CD4-positive, alpha-beta T cell (primary cell): ENCODE measurements at regions of chr3 and their contacts with region 1.

Region 1: DNA sequence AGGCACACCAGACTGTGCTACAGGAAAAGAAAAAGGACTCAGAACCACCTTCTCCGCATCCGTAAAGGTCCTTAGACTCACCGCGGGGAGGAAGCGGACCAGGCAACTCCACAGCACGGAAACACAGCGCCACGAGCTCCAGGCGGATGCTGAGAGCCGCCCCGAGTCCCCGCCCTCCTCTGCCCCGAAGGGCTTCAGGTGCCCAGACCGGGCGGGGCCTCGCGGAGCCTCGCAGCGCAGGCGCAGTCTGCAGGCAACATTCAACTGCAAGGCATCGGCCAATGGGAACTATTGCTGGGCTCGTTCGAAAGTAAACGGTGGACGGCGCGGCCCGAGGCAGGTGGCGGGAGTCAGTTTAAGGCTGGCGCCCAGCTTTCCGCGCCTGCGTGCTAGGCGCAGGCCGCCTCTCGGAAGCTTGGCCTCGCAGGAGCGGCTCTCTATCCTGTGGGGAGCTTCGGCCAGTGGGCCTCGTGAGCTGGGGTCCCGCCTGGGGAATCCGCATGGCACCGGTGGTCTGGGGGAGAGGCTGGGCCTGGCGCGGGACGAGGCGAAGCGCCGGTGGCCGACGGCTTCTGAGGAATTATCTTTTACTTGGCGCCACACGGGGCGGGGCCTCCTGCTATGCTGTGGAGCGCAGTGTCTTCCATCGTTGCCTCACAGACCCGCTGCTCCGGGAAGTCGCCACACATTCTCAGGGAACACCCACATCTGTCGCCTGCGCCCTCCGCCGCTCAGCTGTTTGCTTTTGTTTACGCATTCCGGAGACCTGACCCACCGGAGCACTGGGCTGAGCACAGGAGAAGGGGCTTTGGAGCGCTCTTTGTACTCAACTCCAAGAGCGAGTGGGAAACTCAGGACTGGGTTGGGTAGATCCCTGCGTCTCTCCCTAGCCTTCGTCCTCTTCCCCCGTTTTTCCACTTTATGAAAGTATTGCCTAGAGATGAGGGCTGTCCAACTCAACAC is at the start of gene TRIM59:
- DNase-seq: peak; percentile 91 to 99 (median 96)
- ATAC-seq: peak; percentile 97
- H3K4me3 ChIP-seq: peak within 1 kb of the TSS; percentile 81
- H3K4me3 Mint-ChIP-seq: peak within 1 kb of the TSS; percentile 95
- H3K27ac ChIP-seq: peak within 1 kb of the TSS; percentile 74 to 84
- H3K27ac Mint-ChIP-seq: peak within 1 kb of the TSS; percentile 95
- H3K4me1 ChIP-seq: peaks cover 22% of the 10 kb centered on the region
- H3K4me1 Mint-ChIP-seq: peaks cover 38% of the 10 kb centered on the region
- H3K27me3 ChIP-seq: no peaks in the 10 kb centered on the region
- H3K27me3 Mint-ChIP-seq: no peaks in the 10 kb centered on the region
- CTCF ChIP-seq: no peak
- total RNA-seq, gene TRIM59: 16.2 to 16.4 TPM

Region 2: GRCh38 chr3:160434071-160434470 is 15.8 kb before region 1 on chr3:
- CTCF ChIA-PET with region 1: no interaction called
- POLR2A ChIA-PET with region 1: interaction called, 23 read pairs
- intact Hi-C with region 1: no loop called
- DNase-seq: no peak
- ATAC-seq: no peak
- H3K4me3 ChIP-seq: no peak overlapping the region
- H3K4me3 Mint-ChIP-seq: no peak overlapping the region
- H3K27ac ChIP-seq: no peak overlapping the region
- H3K27ac Mint-ChIP-seq: no peak overlapping the region
- H3K4me1 ChIP-seq: peaks cover 7% of the 10 kb centered on the region
- H3K4me1 Mint-ChIP-seq: peaks cover 41% of the 10 kb centered on the region
- H3K27me3 ChIP-seq: no peaks in the 10 kb centered on the region
- H3K27me3 Mint-ChIP-seq: no peaks in the 10 kb centered on the region
- CTCF ChIP-seq: no peak